WTC11 (cell line): ENCODE measurements at regions of chr6 and their contacts with region 1.

Region 1: DNA sequence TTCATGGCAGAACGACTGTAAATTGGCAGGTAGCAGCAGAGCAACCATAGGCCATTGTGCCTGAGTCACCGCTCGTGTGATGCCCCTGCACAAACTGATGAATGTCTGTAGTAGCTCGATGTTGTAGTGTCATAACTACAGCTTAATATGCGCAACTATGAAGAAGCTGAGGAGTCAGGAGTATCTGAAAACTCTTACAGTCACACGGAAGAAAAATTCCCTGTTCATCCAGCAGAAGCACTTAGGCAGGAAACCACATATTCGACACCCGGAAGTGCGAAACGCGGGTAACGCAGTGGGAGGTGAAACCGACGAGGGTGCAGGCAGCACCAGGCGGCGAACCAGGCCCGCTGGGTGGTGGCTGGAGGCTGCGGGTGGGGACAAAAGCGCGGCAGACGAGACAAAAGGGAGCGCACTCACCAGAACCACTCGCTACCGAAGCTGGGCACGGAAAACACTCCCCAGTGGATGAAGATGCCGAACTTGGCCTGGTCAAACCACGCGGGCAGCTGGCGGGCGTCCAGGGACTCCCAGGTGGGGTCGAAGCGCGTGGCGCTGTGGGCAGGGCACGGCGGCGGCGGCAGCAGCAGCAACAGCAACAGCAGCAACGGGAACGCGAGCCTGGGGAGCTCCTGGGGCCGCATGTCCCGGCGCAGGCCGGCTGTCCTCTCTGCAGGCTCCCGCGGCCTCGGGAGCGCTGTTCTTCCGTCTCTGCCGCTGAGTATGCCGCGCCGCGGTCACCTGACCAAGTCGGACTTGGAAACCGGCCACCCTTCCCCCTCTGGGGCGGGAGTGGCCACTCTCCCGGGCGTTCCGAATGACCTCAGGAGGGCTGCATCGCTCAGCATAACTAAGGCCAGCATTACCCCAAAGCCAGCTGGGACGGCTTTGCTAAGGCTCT is at the start of gene FUCA2:
- DNase-seq: peak; percentile 87
- ATAC-seq: peak; percentile 90
- H3K4me3 Mint-ChIP-seq: peak within 1 kb of the TSS; percentile 83
- H3K27ac Mint-ChIP-seq: peak within 1 kb of the TSS; percentile 82
- H3K4me1 Mint-ChIP-seq: peaks cover 25% of the 10 kb centered on the region
- H3K27me3 Mint-ChIP-seq: peaks cover 10% of the 10 kb centered on the region
- CTCF ChIP-seq: no peak
- total RNA-seq, gene FUCA2: 48.5 to 55.4 TPM (median 51.8 TPM) in 3 replicates

Region 2: DNA sequence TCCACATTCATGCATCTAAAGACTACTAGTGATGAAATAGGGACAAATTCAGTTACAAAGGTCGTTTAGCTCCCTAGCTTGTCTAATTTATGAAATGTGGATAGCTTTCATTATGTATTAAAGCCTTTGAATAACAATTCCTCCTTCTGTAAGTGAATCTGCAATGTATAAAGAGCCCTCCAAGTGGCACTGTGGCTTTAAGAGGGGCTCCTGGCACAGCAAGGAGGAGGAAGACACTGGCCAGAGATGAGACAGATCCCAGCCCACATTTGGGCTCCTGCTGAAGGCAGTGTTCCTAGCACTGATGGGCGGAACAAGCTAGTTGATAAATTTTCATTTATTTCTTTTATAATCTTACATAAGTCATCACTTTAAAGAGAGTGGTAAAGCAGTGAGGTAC is 17.9 kb after region 1 on chr6:
- CTCF ChIA-PET with region 1: interaction called, 12 read pairs
- POLR2A ChIA-PET with region 1: no interaction called
- DNase-seq: no peak
- ATAC-seq: peak; percentile 91
- H3K4me3 Mint-ChIP-seq: no peak overlapping the region
- H3K27ac Mint-ChIP-seq: no peak overlapping the region
- H3K4me1 Mint-ChIP-seq: peaks cover 10% of the 10 kb centered on the region
- H3K27me3 Mint-ChIP-seq: no peaks in the 10 kb centered on the region
- CTCF ChIP-seq: no peak

Region 3: GRCh38 chr6:143536865-143537691 is 25.8 kb after region 1 on chr6:
- CTCF ChIA-PET with region 1: interaction called, 22 read pairs
- POLR2A ChIA-PET with region 1: no interaction called
- DNase-seq: peak; percentile 74
- ATAC-seq: peak; percentile 81
- H3K4me3 Mint-ChIP-seq: peak overlapping the region; percentile 70
- H3K27ac Mint-ChIP-seq: no peak overlapping the region
- H3K4me1 Mint-ChIP-seq: peaks cover 30% of the 10 kb centered on the region
- H3K27me3 Mint-ChIP-seq: peaks cover 44% of the 10 kb centered on the region
- CTCF ChIP-seq: no peak